Gastrocnemius medialis (tissue), 4 donors: ENCODE measurements at regions of chr6 and their contacts with region 1.

Region 1: GRCh38 chr6:57316581-57317059 is 810 bp upstream of the PRIM2 start:
- DNase-seq: peak; percentile 51 to 75
- ATAC-seq: peak; percentile 88 to 96
- H3K4me3 ChIP-seq: peak overlapping the region; percentile 54 to 79 (median 68)
- H3K27ac ChIP-seq: peak overlapping the region; percentile 49 to 80 (median 58)
- H3K4me1 ChIP-seq: peaks cover 14 to 21% of the 10 kb centered on the region in 2 donors
- H3K27me3 ChIP-seq: no peaks in the 10 kb centered on the region
- CTCF ChIP-seq: peak; percentile 67 to 79 (median 76)
- POLR2A ChIP-seq: no peak

Region 2: DNA sequence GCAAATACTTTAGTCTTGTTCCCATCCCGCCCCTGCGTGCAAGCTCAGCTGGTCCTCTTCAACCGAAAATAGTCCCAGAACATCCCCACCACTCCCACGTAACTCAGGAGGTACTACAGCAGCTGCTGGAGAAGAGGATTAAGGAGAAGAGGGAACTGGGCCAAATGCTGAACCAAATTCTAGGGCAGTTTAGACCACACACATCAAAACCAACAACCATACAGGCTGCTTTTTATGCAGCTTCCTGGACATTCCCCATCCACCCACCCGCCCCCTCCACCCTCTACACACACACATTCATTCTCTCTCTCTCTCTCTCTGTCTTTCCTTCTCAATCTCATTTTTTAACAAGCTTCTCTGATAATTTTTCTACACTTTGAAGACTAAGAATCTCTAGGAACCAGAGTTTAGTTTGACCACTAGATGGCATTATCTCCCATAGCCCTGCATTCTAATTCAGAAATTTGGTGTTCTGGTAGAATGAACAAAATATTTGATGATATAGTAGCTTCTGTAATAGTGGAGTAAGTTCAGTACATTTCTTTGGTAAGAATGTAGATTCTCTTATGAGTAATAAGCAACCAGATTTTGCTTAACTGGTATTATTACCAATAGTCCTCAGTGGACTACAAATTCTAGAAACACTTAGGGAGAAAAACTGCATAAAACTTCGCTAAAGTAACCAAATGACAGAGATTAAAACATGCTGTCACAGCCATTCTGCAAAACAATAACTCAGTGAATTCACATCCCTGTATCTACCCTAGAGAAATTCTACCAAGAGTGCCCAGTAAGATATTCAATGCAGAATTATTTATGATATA is 413.8 kb before region 1 on chr6:
- in situ Hi-C with region 1: loop called (anchors 5 to 10 kb)
- intact Hi-C with region 1: loop called (anchors 2 kb)
- DNase-seq: no peak
- ATAC-seq: no peak
- H3K4me3 ChIP-seq: no peak overlapping the region
- H3K27ac ChIP-seq: no peak overlapping the region
- H3K4me1 ChIP-seq: peaks cover 0 to 8% of the 10 kb centered on the region in 2 donors
- H3K27me3 ChIP-seq: no peaks in the 10 kb centered on the region
- CTCF ChIP-seq: peak in 4 of 5 experiments; percentile 29 to 76 (median 59)
- POLR2A ChIP-seq: no peak

Region 3: GRCh38 chr6:56946368-56946767 is 370.3 kb before region 1 on chr6:
- in situ Hi-C with region 1: no loop called
- intact Hi-C with region 1: no loop called
- DNase-seq: no peak
- ATAC-seq: no peak
- H3K4me3 ChIP-seq: no peak overlapping the region
- H3K27ac ChIP-seq: no peak overlapping the region
- H3K4me1 ChIP-seq: no peaks in the 10 kb centered on the region
- H3K27me3 ChIP-seq: no peaks in the 10 kb centered on the region
- CTCF ChIP-seq: no peak
- POLR2A ChIP-seq: no peak

Region 4: GRCh38 chr6:57048577-57048976 is 268.0 kb before region 1 on chr6:
- in situ Hi-C with region 1: no loop called
- intact Hi-C with region 1: loop called (anchors 2 kb)
- DNase-seq: no peak
- ATAC-seq: no peak
- H3K4me3 ChIP-seq: no peak overlapping the region
- H3K27ac ChIP-seq: no peak overlapping the region
- H3K4me1 ChIP-seq: peaks cover 10 to 13% of the 10 kb centered on the region in 2 donors
- H3K27me3 ChIP-seq: no peaks in the 10 kb centered on the region
- CTCF ChIP-seq: no peak
- POLR2A ChIP-seq: no peak

Region 5: DNA sequence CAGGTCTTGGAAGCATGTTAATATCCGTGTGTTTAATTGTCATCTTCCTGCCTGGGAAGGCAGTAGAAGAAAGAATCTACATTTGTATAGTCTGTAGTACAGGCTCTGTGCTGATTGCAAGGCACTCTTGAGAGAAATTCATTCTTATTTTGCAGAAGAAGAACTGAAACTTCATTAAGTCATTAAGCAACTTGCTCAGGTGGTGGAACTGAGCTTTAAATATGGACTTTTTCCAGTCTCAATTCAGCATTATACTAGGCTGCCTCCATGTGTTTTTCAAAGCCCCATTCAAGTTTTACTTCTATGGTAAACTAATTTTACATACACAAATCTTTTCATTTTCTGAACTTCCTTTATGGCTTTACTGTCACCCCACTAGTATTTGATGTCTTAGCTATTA is 207.9 kb before region 1 on chr6:
- in situ Hi-C with region 1: no loop called
- intact Hi-C with region 1: no loop called
- DNase-seq: no peak
- ATAC-seq: no peak
- H3K4me3 ChIP-seq: no peak overlapping the region
- H3K27ac ChIP-seq: no peak overlapping the region
- H3K4me1 ChIP-seq: peaks cover 0 to 7% of the 10 kb centered on the region in 2 donors
- H3K27me3 ChIP-seq: no peaks in the 10 kb centered on the region
- CTCF ChIP-seq: no peak
- POLR2A ChIP-seq: no peak

Region 6: GRCh38 chr6:57147955-57148858 is 168.4 kb before region 1 on chr6:
- in situ Hi-C with region 1: no loop called
- intact Hi-C with region 1: no loop called
- DNase-seq: no peak
- ATAC-seq: no peak
- H3K4me3 ChIP-seq: no peak overlapping the region
- H3K27ac ChIP-seq: no peak overlapping the region
- H3K4me1 ChIP-seq: no peaks in the 10 kb centered on the region
- H3K27me3 ChIP-seq: no peaks in the 10 kb centered on the region
- CTCF ChIP-seq: no peak
- POLR2A ChIP-seq: no peak

Region 7: GRCh38 chr6:57172136-57173055 is 144.2 kb before region 1 on chr6 and contains the start of gene BAG2:
- in situ Hi-C with region 1: loop called in 2 of 4 experiments (anchors 5 to 25 kb)
- intact Hi-C with region 1: loop called (anchors 2 kb)
- DNase-seq: peak; percentile 68 to 88
- ATAC-seq: peak; percentile 88 to 90
- H3K4me3 ChIP-seq: peak within 1 kb of the TSS; percentile 79 to 88 (median 82)
- H3K27ac ChIP-seq: peak within 1 kb of the TSS; percentile 90 to 95 (median 92)
- H3K4me1 ChIP-seq: peaks cover 38 to 41% of the 10 kb centered on the region in 2 donors
- H3K27me3 ChIP-seq: no peaks in the 10 kb centered on the region
- CTCF ChIP-seq: peak in 2 of 5 experiments; percentile 28 to 38
- POLR2A ChIP-seq: peak; percentile 64 to 75
- total RNA-seq, gene BAG2: 6.7 to 15.7 (median 9.8) TPM

Region 8: GRCh38 chr6:57221936-57222742 is 94.5 kb before region 1 on chr6 and contains the start of gene RAB23:
- in situ Hi-C with region 1: no loop called
- intact Hi-C with region 1: loop called (anchors 1 kb)
- DNase-seq: peak; percentile 62 to 75
- ATAC-seq: peak; percentile 94 to 95
- H3K4me3 ChIP-seq: peak within 1 kb of the TSS; percentile 87 to 100 (median 92)
- H3K27ac ChIP-seq: peak within 1 kb of the TSS; percentile 75 to 83 (median 81)
- H3K4me1 ChIP-seq: peaks cover 0 to 5% of the 10 kb centered on the region in 2 donors
- H3K27me3 ChIP-seq: no peaks in the 10 kb centered on the region
- CTCF ChIP-seq: peak in 1 of 5 experiments; percentile 16
- POLR2A ChIP-seq: peak; percentile 75 to 82
- total RNA-seq, gene RAB23: 8.7 to 18.5 (median 11.6) TPM